ENCODE measurements at regions of chr9 and their contacts with region 1.

Region 1: DNA sequence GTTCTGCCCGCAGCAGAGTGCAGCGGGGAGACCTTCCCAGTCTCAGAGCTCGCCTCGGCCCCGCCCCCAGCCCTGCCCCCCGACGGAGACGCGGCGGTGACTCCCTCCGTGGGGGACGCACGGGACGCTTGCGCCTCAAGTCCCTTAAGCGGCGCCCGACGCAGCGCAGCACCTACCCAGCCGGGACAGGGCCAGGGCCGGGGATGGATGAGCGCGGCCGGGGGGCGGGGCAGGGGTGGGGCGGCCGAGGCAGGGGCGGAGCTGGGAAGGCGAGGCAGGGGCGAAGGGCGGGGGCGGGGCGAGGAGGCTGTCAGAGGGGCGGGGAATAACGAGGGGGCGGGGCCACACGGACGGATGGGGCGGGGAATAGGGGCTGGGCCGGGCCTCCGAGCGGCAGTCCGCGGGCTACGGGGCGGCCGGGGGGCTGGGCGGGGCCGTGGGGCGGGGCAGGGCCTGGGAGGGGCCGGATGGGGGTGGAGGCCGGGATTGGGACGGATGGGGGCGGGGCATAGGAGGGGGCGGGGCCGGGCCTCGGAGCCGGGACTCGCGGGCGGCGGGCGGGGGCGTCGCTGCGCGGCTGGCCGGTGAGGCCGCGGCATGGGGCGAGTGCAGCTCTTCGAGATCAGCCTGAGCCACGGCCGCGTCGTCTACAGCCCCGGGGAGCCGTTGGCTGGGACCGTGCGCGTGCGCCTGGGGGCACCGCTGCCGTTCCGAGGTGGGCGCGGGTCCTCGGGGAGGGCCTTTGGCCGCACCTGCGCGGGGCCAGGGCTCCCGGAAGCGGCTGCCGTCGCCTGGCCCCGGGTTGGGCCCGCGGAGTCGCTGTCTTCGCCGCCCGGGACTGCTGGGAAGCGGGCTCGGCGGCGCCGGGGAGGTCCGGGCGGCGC is at the start of gene ARRDC1:
- DNase-seq: peak; percentile 89 to 97 (median 93)
- ATAC-seq: peak; percentile 81
- H3K4me3 ChIP-seq: peak within 1 kb of the TSS; percentile 46 to 70
- H3K4me3 Mint-ChIP-seq: peak within 1 kb of the TSS; percentile 82
- H3K27ac ChIP-seq: peak within 1 kb of the TSS in 1 of 2 experiments; percentile 52
- H3K27ac Mint-ChIP-seq: peak within 1 kb of the TSS; percentile 80
- H3K4me1 ChIP-seq: peaks cover 15% of the 10 kb centered on the region
- H3K4me1 Mint-ChIP-seq: peaks cover 20% of the 10 kb centered on the region
- H3K27me3 ChIP-seq: no peaks in the 10 kb centered on the region
- H3K27me3 Mint-ChIP-seq: no peaks in the 10 kb centered on the region
- CTCF ChIP-seq: no peak
- total RNA-seq, gene ARRDC1: 30.8 to 35.9 TPM

Region 2: GRCh38 chr9:136545966-136546698 is 1059.2 kb before region 1 on chr9 and contains the start of gene NOTCH1:
- CTCF ChIA-PET with region 1: no interaction called
- POLR2A ChIA-PET with region 1: no interaction called
- intact Hi-C with region 1: loop called in 1 of 2 experiments (anchors 10 kb)
- DNase-seq: peak; percentile 75 to 91 (median 83)
- ATAC-seq: peak; percentile 78
- H3K4me3 ChIP-seq: peak within 1 kb of the TSS; percentile 82 to 90
- H3K4me3 Mint-ChIP-seq: peak within 1 kb of the TSS; percentile 85
- H3K27ac ChIP-seq: peak within 1 kb of the TSS; percentile 50 to 55
- H3K27ac Mint-ChIP-seq: peak within 1 kb of the TSS; percentile 85
- H3K4me1 ChIP-seq: peaks cover 31% of the 10 kb centered on the region
- H3K4me1 Mint-ChIP-seq: peaks cover 27% of the 10 kb centered on the region
- H3K27me3 ChIP-seq: no peaks in the 10 kb centered on the region
- H3K27me3 Mint-ChIP-seq: no peaks in the 10 kb centered on the region
- CTCF ChIP-seq: no peak
- total RNA-seq, gene NOTCH1: 29.0 to 30.0 TPM

Region 3: GRCh38 chr9:137168905-137169856 is 436.2 kb before region 1 on chr9:
- CTCF ChIA-PET with region 1: no interaction called
- POLR2A ChIA-PET with region 1: no interaction called
- intact Hi-C with region 1: no loop called
- DNase-seq: peak in 1 of 9 experiments; percentile 38
- ATAC-seq: peak; percentile 43
- H3K4me3 ChIP-seq: peak overlapping the region in 1 of 2 experiments; percentile 15
- H3K4me3 Mint-ChIP-seq: peak overlapping the region; percentile 57
- H3K27ac ChIP-seq: no peak overlapping the region
- H3K27ac Mint-ChIP-seq: no peak overlapping the region
- H3K4me1 ChIP-seq: peaks cover 15% of the 10 kb centered on the region
- H3K4me1 Mint-ChIP-seq: peaks cover 5% of the 10 kb centered on the region
- H3K27me3 ChIP-seq: peaks cover 16 to 45% of the 10 kb centered on the region in 2 experiments
- H3K27me3 Mint-ChIP-seq: peaks cover 28% of the 10 kb centered on the region
- CTCF ChIP-seq: no peak

Region 4: DNA sequence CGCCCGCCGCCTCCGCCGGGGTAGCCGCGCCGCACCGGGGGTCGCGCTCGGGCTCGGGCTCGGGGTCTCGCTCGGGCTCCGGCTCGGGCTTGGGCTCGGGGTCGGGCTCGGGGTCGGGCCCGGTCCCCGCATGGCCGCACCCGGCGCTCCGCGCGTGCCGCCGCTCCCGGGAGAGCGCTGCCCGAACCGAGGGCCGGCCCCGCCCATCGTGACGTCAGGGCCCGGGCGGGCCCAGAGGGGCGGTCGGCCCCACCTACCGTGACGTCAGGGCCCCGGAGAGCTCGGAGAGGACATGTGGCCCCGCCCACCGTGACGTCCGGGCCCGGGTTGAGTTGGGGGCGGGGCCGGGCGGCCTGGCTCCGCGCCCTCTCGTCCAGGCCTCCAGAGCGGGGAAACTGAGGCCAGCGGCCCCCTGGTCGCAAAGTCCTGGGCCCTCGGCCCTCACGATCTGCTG is 146.2 kb before region 1 on chr9 and contains the start of gene NSMF:
- CTCF ChIA-PET with region 1: no interaction called
- POLR2A ChIA-PET with region 1: no interaction called
- intact Hi-C with region 1: loop called in 1 of 2 experiments (anchors 5 kb)
- DNase-seq: peak in 8 of 9 experiments; percentile 87 to 97 (median 92)
- ATAC-seq: peak; percentile 71
- H3K4me3 ChIP-seq: peak within 1 kb of the TSS; percentile 49 to 54
- H3K4me3 Mint-ChIP-seq: peak within 1 kb of the TSS; percentile 69
- H3K27ac ChIP-seq: peak within 1 kb of the TSS; percentile 71 to 80
- H3K27ac Mint-ChIP-seq: peak within 1 kb of the TSS; percentile 79
- H3K4me1 ChIP-seq: peaks cover 72% of the 10 kb centered on the region
- H3K4me1 Mint-ChIP-seq: peaks cover 44% of the 10 kb centered on the region
- H3K27me3 ChIP-seq: no peaks in the 10 kb centered on the region
- H3K27me3 Mint-ChIP-seq: no peaks in the 10 kb centered on the region
- CTCF ChIP-seq: no peak
- total RNA-seq, gene NSMF: 82.8 to 87.2 TPM

Region 5: GRCh38 chr9:137578518-137579258 is 26.7 kb before region 1 on chr9 and contains the start of gene DPH7:
- CTCF ChIA-PET with region 1: interaction called, 6 read pairs
- POLR2A ChIA-PET with region 1: no interaction called
- intact Hi-C with region 1: loop called (anchors 1 kb)
- DNase-seq: peak; percentile 91 to 98 (median 96)
- ATAC-seq: peak; percentile 96
- H3K4me3 ChIP-seq: peak within 1 kb of the TSS; percentile 58 to 95
- H3K4me3 Mint-ChIP-seq: peak within 1 kb of the TSS; percentile 81
- H3K27ac ChIP-seq: peak within 1 kb of the TSS; percentile 36 to 57
- H3K27ac Mint-ChIP-seq: peak within 1 kb of the TSS; percentile 67
- H3K4me1 ChIP-seq: peaks cover 24% of the 10 kb centered on the region
- H3K4me1 Mint-ChIP-seq: peaks cover 27% of the 10 kb centered on the region
- H3K27me3 ChIP-seq: no peaks in the 10 kb centered on the region
- H3K27me3 Mint-ChIP-seq: no peaks in the 10 kb centered on the region
- CTCF ChIP-seq: peak; percentile 79
- total RNA-seq, gene DPH7: 47.0 to 49.8 TPM

Region 6: GRCh38 chr9:137590462-137591383 is 14.6 kb before region 1 on chr9 and contains the start of gene ZMYND19:
- CTCF ChIA-PET with region 1: interaction called, 3 read pairs
- POLR2A ChIA-PET with region 1: interaction called, 4 read pairs
- intact Hi-C with region 1: loop called (anchors 1 kb)
- DNase-seq: peak; percentile 78 to 95 (median 90)
- ATAC-seq: peak; percentile 98
- H3K4me3 ChIP-seq: peak within 1 kb of the TSS; percentile 61 to 63
- H3K4me3 Mint-ChIP-seq: peak within 1 kb of the TSS; percentile 93
- H3K27ac ChIP-seq: peak within 1 kb of the TSS in 1 of 2 experiments; percentile 56
- H3K27ac Mint-ChIP-seq: peak within 1 kb of the TSS; percentile 90
- H3K4me1 ChIP-seq: peaks cover 15% of the 10 kb centered on the region
- H3K4me1 Mint-ChIP-seq: peaks cover 12% of the 10 kb centered on the region
- H3K27me3 ChIP-seq: no peaks in the 10 kb centered on the region
- H3K27me3 Mint-ChIP-seq: no peaks in the 10 kb centered on the region
- CTCF ChIP-seq: no peak
- total RNA-seq, gene ZMYND19: 9.0 to 10.3 TPM

Region 7: GRCh38 chr9:137618105-137619067 is 13.0 kb after region 1 on chr9 and contains the start of gene EHMT1:
- CTCF ChIA-PET with region 1: no interaction called
- POLR2A ChIA-PET with region 1: interaction called, 5 read pairs
- intact Hi-C with region 1: loop called (anchors 1 kb)
- DNase-seq: peak; percentile 82 to 97 (median 89)
- ATAC-seq: peak; percentile 85
- H3K4me3 ChIP-seq: peak within 1 kb of the TSS; percentile 94 to 97
- H3K4me3 Mint-ChIP-seq: peak within 1 kb of the TSS; percentile 92
- H3K27ac ChIP-seq: peak within 1 kb of the TSS; percentile 82 to 97
- H3K27ac Mint-ChIP-seq: peak within 1 kb of the TSS; percentile 94
- H3K4me1 ChIP-seq: peaks cover 30% of the 10 kb centered on the region
- H3K4me1 Mint-ChIP-seq: peaks cover 42% of the 10 kb centered on the region
- H3K27me3 ChIP-seq: no peaks in the 10 kb centered on the region
- H3K27me3 Mint-ChIP-seq: no peaks in the 10 kb centered on the region
- CTCF ChIP-seq: no peak
- total RNA-seq, gene EHMT1: 83.1 to 86.2 TPM

Region 8: GRCh38 chr9:137648396-137648795 is 43.0 kb after region 1 on chr9:
- CTCF ChIA-PET with region 1: no interaction called
- POLR2A ChIA-PET with region 1: no interaction called
- intact Hi-C with region 1: no loop called
- DNase-seq: no peak
- ATAC-seq: no peak
- H3K4me3 ChIP-seq: no peak overlapping the region
- H3K4me3 Mint-ChIP-seq: no peak overlapping the region
- H3K27ac ChIP-seq: no peak overlapping the region
- H3K27ac Mint-ChIP-seq: peak overlapping the region; percentile 62
- H3K4me1 ChIP-seq: peaks cover 14% of the 10 kb centered on the region
- H3K4me1 Mint-ChIP-seq: peaks cover 50% of the 10 kb centered on the region
- H3K27me3 ChIP-seq: no peaks in the 10 kb centered on the region
- H3K27me3 Mint-ChIP-seq: no peaks in the 10 kb centered on the region
- CTCF ChIP-seq: no peak

Measured in CD8-positive, alpha-beta T cell (primary cell).